ENCODE measurements at regions of chr1 and their contacts with region 1.

Region 1: GRCh38 chr1:67274623-67275325 is 32.9 kb upstream of the IL12RB2 start:
- DNase-seq: peak; percentile 47
- ATAC-seq: peak; percentile 91
- H3K4me3 Mint-ChIP-seq: no peak overlapping the region
- H3K27ac Mint-ChIP-seq: peak overlapping the region; percentile 79
- H3K4me1 Mint-ChIP-seq: peaks cover 41% of the 10 kb centered on the region
- H3K27me3 Mint-ChIP-seq: peaks cover 3% of the 10 kb centered on the region
- CTCF ChIP-seq: no peak

Region 2: GRCh38 chr1:67239738-67240137 is 35.0 kb before region 1 on chr1:
- CTCF ChIA-PET with region 1: interaction called, 4 read pairs
- POLR2A ChIA-PET with region 1: no interaction called
- intact Hi-C with region 1: loop called (anchors 5 kb)
- DNase-seq: no peak
- ATAC-seq: peak; percentile 20
- H3K4me3 Mint-ChIP-seq: no peak overlapping the region
- H3K27ac Mint-ChIP-seq: no peak overlapping the region
- H3K4me1 Mint-ChIP-seq: peaks cover 13% of the 10 kb centered on the region
- H3K27me3 Mint-ChIP-seq: peaks cover 5% of the 10 kb centered on the region
- CTCF ChIP-seq: no peak

Region 3: GRCh38 chr1:67261680-67262079 is 13.1 kb before region 1 on chr1:
- CTCF ChIA-PET with region 1: interaction called, 18 read pairs
- POLR2A ChIA-PET with region 1: interaction called, 10 read pairs
- intact Hi-C with region 1: no loop called
- DNase-seq: peak; percentile 63
- ATAC-seq: peak; percentile 82
- H3K4me3 Mint-ChIP-seq: no peak overlapping the region
- H3K27ac Mint-ChIP-seq: no peak overlapping the region
- H3K4me1 Mint-ChIP-seq: peaks cover 28% of the 10 kb centered on the region
- H3K27me3 Mint-ChIP-seq: no peaks in the 10 kb centered on the region
- CTCF ChIP-seq: peak; percentile 39

Region 4: DNA sequence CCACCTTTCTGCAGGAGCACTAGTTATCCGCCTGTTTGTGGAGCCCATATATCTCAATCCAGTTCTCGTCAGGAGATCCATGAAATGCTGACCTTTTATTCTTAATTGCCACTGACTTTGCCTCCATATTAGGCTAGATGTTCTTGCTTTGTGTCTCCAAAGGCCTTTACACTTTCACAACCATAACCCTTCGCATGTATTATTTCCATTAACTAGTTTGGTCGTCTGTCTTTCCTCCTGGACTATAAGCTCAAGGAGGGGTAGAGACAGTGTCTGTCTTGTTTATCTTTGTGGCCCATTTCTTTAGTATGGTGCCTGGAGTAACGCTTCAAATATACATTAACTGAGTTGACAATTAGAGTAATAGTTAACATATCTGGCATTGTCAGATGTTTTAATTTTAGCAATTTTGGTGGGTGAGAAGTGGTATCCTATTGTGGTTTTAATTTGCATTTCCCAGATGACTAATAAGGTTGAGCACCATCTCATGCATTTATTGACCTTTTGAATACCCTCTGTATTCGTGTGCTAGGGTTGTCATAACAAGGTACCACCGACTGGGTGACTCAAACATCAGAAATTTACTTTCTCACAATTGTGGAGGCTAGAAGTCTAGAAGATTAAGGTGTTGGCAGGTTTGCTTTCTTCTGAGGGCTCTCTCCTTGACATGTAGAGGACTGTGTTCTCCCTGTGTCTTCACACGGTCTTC is 11.2 kb after region 1 on chr1:
- CTCF ChIA-PET with region 1: interaction called, 19 read pairs
- POLR2A ChIA-PET with region 1: interaction called, 38 read pairs
- intact Hi-C with region 1: no loop called
- DNase-seq: peak; percentile 57
- ATAC-seq: peak; percentile 96
- H3K4me3 Mint-ChIP-seq: no peak overlapping the region
- H3K27ac Mint-ChIP-seq: peak overlapping the region; percentile 88
- H3K4me1 Mint-ChIP-seq: peaks cover 37% of the 10 kb centered on the region
- H3K27me3 Mint-ChIP-seq: peaks cover 4% of the 10 kb centered on the region
- CTCF ChIP-seq: no peak

Region 5: DNA sequence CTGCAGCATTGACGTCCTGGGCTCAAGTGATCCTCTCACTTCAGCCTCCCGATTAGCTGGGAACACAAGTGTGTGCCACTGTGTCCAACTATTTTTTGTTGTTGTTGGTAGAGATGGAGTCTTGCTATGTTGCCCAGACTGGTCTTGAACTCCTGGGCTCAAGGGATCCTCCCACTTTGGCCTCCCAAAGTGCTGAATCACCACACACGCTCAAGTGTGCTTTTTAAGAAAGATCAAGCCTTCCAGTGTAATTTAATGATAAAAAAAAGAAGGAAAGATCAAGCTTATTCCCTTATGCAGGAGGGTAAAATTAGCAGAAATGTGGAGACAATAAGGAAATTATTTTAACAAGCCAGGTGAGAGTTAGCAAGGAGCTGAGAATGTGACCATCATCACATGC is 216.5 kb after region 1 on chr1:
- CTCF ChIA-PET with region 1: no interaction called
- POLR2A ChIA-PET with region 1: no interaction called
- intact Hi-C with region 1: no loop called
- DNase-seq: no peak
- ATAC-seq: no peak
- H3K4me3 Mint-ChIP-seq: no peak overlapping the region
- H3K27ac Mint-ChIP-seq: no peak overlapping the region
- H3K4me1 Mint-ChIP-seq: no peaks in the 10 kb centered on the region
- H3K27me3 Mint-ChIP-seq: no peaks in the 10 kb centered on the region
- CTCF ChIP-seq: no peak

Measured in activated CD8-positive, alpha-beta T cell treated with anti-CD3 and anti-CD28 coated beads for 36 hours (primary cell).